ENCODE measurements at regions of chr14 and their contacts with region 1.

Region 1: GRCh38 chr14:72420725-72421474 is 473.0 kb downstream of the DPF3 start:
- DNase-seq: peak; percentile 38
- H3K4me3 ChIP-seq: no peak overlapping the region
- H3K27ac ChIP-seq: no peak overlapping the region
- H3K4me1 ChIP-seq: no peaks in the 10 kb centered on the region
- H3K27me3 ChIP-seq: no peaks in the 10 kb centered on the region
- CTCF ChIP-seq: peak; percentile 96 to 99

Region 2: GRCh38 chr14:72023722-72024407 is 397.0 kb before region 1 on chr14:
- CTCF ChIA-PET with region 1: no interaction called
- dilution Hi-C with region 1: no loop called
- in situ Hi-C with region 1: no loop called
- intact Hi-C with region 1: loop called (anchors 2 kb)
- DNase-seq: peak; percentile 14
- H3K4me3 ChIP-seq: no peak overlapping the region
- H3K27ac ChIP-seq: no peak overlapping the region
- H3K4me1 ChIP-seq: peaks cover 17% of the 10 kb centered on the region
- H3K27me3 ChIP-seq: no peaks in the 10 kb centered on the region
- CTCF ChIP-seq: peak; percentile 51 to 55

Region 3: GRCh38 chr14:72583316-72584272 is 162.7 kb after region 1 on chr14:
- CTCF ChIA-PET with region 1: no interaction called
- dilution Hi-C with region 1: no loop called
- in situ Hi-C with region 1: no loop called
- intact Hi-C with region 1: no loop called
- DNase-seq: no peak
- H3K4me3 ChIP-seq: no peak overlapping the region
- H3K27ac ChIP-seq: no peak overlapping the region
- H3K4me1 ChIP-seq: no peaks in the 10 kb centered on the region
- H3K27me3 ChIP-seq: no peaks in the 10 kb centered on the region
- CTCF ChIP-seq: no peak

Region 4: GRCh38 chr14:72665259-72665658 is 244.4 kb after region 1 on chr14:
- CTCF ChIA-PET with region 1: no interaction called
- dilution Hi-C with region 1: no loop called
- in situ Hi-C with region 1: no loop called
- intact Hi-C with region 1: no loop called
- DNase-seq: peak; percentile 99
- H3K4me3 ChIP-seq: no peak overlapping the region
- H3K27ac ChIP-seq: peak overlapping the region; percentile 92
- H3K4me1 ChIP-seq: peaks cover 27% of the 10 kb centered on the region
- H3K27me3 ChIP-seq: no peaks in the 10 kb centered on the region
- CTCF ChIP-seq: no peak

Measured in mammary epithelial cell (primary cell).